PC-3 (cell line): ENCODE measurements at regions of chr19 and their contacts with region 1.

Region 1: GRCh38 chr19:52942386-52943133 is 19.3 kb upstream of the ZNF888 start:
- DNase-seq: peak; percentile 88
- ATAC-seq: peak; percentile 73
- H3K4me3 ChIP-seq: peak overlapping the region; percentile 81
- H3K27ac ChIP-seq: peak overlapping the region; percentile 69
- H3K4me1 ChIP-seq: peaks cover 47% of the 10 kb centered on the region
- H3K27me3 ChIP-seq: no peaks in the 10 kb centered on the region
- CTCF ChIP-seq: no peak

Region 2: GRCh38 chr19:52897144-52897935 is 45.2 kb before region 1 on chr19 and contains the start of gene ZNF320:
- CTCF ChIA-PET with region 1: no interaction called
- POLR2A ChIA-PET with region 1: interaction called, 3 read pairs
- intact Hi-C with region 1: loop called (anchors 2 kb)
- DNase-seq: peak; percentile 95
- ATAC-seq: peak; percentile 100
- H3K4me3 ChIP-seq: peak within 1 kb of the TSS; percentile 87
- H3K27ac ChIP-seq: peak within 1 kb of the TSS; percentile 78
- H3K4me1 ChIP-seq: no peaks in the 10 kb centered on the region
- H3K27me3 ChIP-seq: no peaks in the 10 kb centered on the region
- CTCF ChIP-seq: no peak
- total RNA-seq, gene ZNF320: 7.7 and 10.6 TPM in 2 replicates

Region 3: DNA sequence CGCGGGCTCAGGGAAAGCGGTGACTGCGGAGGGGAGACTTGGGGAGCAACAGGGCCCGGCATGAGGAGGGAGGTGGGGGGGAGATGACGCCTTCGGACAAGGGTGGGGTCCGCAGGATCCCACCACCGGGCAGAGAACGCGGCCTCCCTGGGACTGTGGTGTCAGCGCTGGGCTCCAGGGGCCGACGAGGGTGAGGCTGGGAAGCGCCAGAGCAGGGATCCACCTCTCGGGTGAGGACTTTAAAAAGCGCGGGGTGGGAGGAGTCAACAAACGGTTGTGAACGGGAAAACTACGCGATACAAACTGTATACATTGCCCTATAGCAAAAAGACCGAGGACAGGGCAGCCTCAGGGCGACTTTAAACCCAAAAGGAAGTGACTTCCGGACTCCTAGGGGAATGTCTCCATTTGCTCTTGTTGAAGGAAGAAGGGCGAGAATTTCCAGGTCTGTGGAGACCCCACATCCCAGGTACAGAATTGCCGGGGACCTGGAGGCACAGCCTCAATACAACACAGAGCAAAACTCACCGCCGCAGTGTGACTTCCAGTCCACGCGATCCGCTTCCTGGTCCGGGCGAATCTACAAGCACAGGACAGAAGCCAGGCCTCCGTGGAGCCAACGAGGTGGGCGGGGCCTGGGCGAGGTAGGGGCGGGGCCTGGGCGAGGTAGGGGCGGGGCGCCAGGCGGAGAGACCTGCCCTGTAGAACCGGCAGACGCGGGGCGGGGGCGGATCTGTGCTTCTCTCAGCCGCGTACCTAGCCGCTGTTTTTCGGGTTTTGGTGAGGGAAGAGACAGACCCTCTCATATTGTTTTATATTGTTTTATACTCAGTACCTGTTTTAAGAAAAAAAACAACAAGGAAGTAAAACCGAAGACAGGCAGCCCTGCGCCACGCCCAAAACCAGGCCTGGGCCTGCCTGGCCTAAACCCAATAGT is 19.5 kb before region 1 on chr19 and contains the start of gene ZNF888:
- CTCF ChIA-PET with region 1: no interaction called
- POLR2A ChIA-PET with region 1: no interaction called
- intact Hi-C with region 1: loop called (anchors 2 kb)
- DNase-seq: peak; percentile 83
- ATAC-seq: peak; percentile 96
- H3K4me3 ChIP-seq: peak within 1 kb of the TSS; percentile 74
- H3K27ac ChIP-seq: peak within 1 kb of the TSS; percentile 70
- H3K4me1 ChIP-seq: peaks cover 14% of the 10 kb centered on the region
- H3K27me3 ChIP-seq: no peaks in the 10 kb centered on the region
- CTCF ChIP-seq: no peak
- total RNA-seq, gene ZNF888: 5.2 and 5.4 TPM in 2 replicates

Region 4: GRCh38 chr19:52962394-52963246 is 20.1 kb after region 1 on chr19 and contains the start of gene ZNF816:
- CTCF ChIA-PET with region 1: no interaction called
- POLR2A ChIA-PET with region 1: interaction called, 5 read pairs
- intact Hi-C with region 1: loop called (anchors 1 kb)
- DNase-seq: peak; percentile 97
- ATAC-seq: peak; percentile 91
- H3K4me3 ChIP-seq: peak within 1 kb of the TSS; percentile 82
- H3K27ac ChIP-seq: peak within 1 kb of the TSS; percentile 40
- H3K4me1 ChIP-seq: peaks cover 21% of the 10 kb centered on the region
- H3K27me3 ChIP-seq: no peaks in the 10 kb centered on the region
- CTCF ChIP-seq: no peak
- total RNA-seq, gene ZNF816: 7.6 and 10.2 TPM in 2 replicates

Region 5: DNA sequence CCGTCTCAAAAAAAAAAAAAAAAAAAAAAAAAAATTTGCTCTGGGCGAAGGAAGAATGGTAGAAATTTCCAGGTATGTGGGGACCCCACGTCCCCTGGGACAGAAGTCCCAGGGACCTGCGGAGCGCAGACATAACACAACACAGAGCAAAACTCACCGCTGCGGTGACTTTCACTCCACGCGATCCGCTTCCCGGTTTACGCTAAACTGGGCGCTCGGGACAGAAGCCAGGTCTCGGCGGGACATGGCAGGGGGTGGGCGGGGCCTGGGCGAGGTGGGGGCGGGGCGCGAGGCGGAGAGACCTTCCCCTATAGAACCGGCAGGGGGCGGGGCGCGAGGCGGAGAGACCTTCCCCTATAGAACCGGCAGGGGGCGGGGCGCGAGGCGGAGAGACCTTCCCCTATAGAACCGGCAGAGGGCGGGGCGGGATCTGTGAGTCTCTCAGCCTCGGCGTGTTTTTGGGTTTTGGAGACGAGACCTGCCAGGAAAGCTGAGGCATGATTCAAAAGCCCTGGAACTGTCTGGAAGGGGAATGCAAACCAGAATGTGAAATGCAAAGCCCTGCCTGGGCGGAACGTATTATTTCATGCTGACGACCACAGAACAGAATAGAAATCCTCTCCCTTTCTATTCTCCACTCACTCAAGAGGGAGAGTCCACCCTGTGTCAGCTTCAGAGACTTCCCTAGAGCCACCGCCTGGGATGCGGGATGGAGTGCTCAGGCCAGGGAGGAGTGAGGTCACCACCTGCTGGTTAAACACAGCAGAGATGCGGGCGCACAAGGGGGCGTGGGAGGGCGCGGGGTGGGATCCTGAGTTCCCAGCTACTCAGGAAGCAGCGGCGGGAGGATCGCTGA is 51.0 kb after region 1 on chr19:
- CTCF ChIA-PET with region 1: no interaction called
- POLR2A ChIA-PET with region 1: no interaction called
- intact Hi-C with region 1: loop called (anchors 5 kb)
- DNase-seq: peak; percentile 79
- ATAC-seq: peak; percentile 68
- H3K4me3 ChIP-seq: peak overlapping the region; percentile 67
- H3K27ac ChIP-seq: 0 out of 2 replicates have a peak overlapping the region, but pooled peaks have one; percentile 38
- H3K4me1 ChIP-seq: peaks cover 22% of the 10 kb centered on the region
- H3K27me3 ChIP-seq: no peaks in the 10 kb centered on the region
- CTCF ChIP-seq: no peak; the same call in 1 of the 2 replicates